OCI-LY7 (cell line): ENCODE measurements at regions of chr2 and their contacts with region 1.

Region 1: DNA sequence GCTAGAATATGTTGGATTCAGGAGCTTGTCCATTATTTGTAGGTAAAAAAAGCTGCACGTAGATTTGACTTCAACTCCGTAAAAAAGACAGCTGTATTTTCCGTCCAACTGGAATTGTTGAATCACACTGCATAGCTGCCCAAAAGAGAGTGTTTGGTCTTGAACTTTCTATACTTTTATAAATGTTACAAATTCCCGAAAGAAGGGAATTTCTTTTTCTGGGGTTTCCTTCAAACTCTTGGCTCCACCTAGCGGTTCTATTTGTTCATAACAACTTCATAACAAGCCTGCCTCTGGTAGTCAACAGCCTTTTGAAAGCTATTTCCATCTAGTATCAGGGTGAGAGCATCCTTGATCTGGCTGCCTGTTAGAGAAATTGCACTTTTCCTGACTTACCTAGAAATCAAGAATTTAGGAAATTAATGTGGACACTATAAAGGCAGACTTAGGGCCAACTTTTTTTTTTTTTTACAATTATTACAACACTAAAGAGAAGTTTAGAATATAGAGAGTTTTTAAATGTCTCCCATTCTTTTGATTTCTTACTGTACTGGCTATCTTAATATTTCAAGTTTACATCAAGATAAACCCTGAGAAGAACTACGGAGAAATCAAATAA is 48.1 kb downstream of the TMEM185B start:
- DNase-seq: peak; percentile 78
- H3K4me3 ChIP-seq: no peak overlapping the region
- H3K27ac ChIP-seq: peak overlapping the region; percentile 30
- H3K4me1 ChIP-seq: peaks cover 48% of the 10 kb centered on the region
- CTCF ChIP-seq: peak; percentile 98

Region 2: DNA sequence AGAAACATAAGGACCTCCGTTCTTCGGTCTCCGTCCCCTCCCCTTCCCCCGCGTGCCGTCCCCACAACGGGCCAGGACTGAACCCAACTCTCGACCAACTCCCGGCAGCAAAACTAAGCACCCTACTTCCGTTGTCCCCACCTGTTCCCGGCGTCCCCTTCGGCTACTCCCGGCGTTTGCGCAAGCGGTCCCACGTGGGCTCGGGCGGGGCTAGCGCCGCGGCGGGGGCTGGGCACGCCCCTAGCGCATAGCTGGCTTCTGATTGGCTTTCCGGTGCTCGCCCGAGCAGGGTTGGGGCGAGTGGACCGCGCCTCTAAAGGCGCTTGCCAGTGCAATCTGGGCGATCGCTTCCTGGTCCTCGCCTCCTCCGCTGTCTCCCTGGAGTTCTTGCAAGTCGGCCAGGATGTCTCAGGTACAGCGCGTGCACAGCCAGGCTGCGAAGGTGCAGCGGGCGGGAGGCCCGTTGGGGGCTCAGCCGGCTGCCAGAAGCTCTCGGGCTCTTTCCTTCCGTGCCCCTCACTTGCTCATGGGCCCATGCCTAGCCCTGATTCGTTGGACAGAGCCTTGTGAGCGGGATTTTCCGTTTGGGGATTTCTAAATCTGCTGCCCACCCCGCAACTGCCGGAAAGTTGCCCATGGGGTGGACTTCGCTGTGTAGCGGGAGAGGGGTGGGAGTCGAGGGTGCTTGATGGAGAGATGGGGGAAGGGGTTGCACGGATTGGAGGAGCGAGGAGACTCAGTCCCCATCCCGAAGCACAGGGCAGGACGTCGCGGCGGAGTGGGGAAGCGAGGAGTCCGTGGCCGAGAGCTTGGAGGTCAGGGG is 808.2 kb before region 1 on chr2 and contains the starts of genes C2orf76 and DBI:
- CTCF ChIA-PET with region 1: no interaction called
- POLR2A ChIA-PET with region 1: no interaction called
- intact Hi-C with region 1: loop called (anchors 5 kb)
- DNase-seq: peak; percentile 97
- H3K4me3 ChIP-seq: peak within 1 kb of the TSS; percentile 92
- H3K27ac ChIP-seq: peak within 1 kb of the TSS; percentile 77
- H3K4me1 ChIP-seq: peaks cover 39% of the 10 kb centered on the region
- CTCF ChIP-seq: no peak
- total RNA-seq, gene C2orf76: 14.2 and 15.4 TPM in 2 replicates
- total RNA-seq, gene DBI: 293 and 348 TPM in 2 replicates

Region 3: DNA sequence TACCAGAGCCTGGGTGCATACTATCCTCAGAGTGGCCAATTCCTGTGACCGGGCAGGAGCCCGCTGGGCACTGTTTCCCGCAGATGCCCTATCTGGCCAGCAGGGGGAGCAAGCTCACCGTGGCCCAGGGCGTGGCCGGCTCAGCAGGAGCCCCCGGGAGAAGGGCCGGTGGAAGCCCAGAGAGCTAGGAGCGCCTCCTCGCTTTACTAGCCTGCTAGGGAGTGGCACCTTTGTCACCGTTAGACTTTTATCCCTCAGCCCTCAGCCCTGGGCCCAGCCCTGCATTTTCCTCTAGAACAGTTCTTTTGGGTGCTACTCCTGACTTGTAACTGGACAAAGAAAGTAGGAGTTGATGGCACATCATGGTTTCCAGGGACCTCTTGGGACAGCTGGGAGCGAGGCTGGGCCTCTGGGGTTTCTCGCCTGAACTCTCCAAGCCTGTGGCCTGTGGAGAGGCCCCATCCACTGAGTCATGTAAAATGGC is 472.1 kb before region 1 on chr2:
- CTCF ChIA-PET with region 1: interaction called, 3 read pairs
- POLR2A ChIA-PET with region 1: no interaction called
- intact Hi-C with region 1: loop called (anchors 1 kb)
- DNase-seq: peak; percentile 75
- H3K4me3 ChIP-seq: no peak overlapping the region
- H3K27ac ChIP-seq: no peak overlapping the region
- H3K4me1 ChIP-seq: peaks cover 14% of the 10 kb centered on the region
- CTCF ChIP-seq: peak; percentile 97

Region 4: GRCh38 chr2:119759451-119760236 is 415.4 kb before region 1 on chr2 and contains the start of gene PTPN4:
- CTCF ChIA-PET with region 1: interaction called, 6 read pairs
- POLR2A ChIA-PET with region 1: interaction called, 23 read pairs
- intact Hi-C with region 1: loop called (anchors 1 kb)
- DNase-seq: peak; percentile 99
- H3K4me3 ChIP-seq: peak within 1 kb of the TSS; percentile 95
- H3K27ac ChIP-seq: peak within 1 kb of the TSS; percentile 84
- H3K4me1 ChIP-seq: peaks cover 19% of the 10 kb centered on the region
- CTCF ChIP-seq: no peak
- total RNA-seq, gene PTPN4: 29.8 and 50.6 TPM in 2 replicates

Region 5: GRCh38 chr2:120005834-120006521 is 169.1 kb before region 1 on chr2:
- CTCF ChIA-PET with region 1: no interaction called
- POLR2A ChIA-PET with region 1: interaction called, 10 read pairs
- intact Hi-C with region 1: no loop called
- DNase-seq: peak; percentile 65
- H3K4me3 ChIP-seq: peak overlapping the region; percentile 47
- H3K27ac ChIP-seq: peak overlapping the region; percentile 14
- H3K4me1 ChIP-seq: peaks cover 18% of the 10 kb centered on the region
- CTCF ChIP-seq: no peak

Region 6: DNA sequence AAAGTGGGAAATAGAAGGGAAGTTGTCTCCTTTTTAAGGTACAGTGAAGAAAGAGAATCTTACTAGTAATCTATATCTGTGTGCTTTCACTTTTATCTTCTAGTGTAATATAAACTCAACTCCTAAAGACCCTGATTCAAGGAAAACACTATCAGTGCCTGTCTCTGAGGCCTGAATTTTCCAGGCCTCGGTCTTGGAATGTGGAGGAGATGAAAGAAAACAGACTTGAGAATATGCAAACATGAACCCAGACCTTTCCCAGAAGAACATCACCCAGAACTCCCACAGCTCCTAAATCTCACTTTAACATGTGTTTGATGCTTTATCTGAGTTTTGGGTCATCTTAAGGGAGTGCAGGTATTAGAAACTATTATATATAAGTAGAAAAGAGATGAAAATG is 110.4 kb before region 1 on chr2:
- CTCF ChIA-PET with region 1: no interaction called
- POLR2A ChIA-PET with region 1: no interaction called
- intact Hi-C with region 1: no loop called
- DNase-seq: no peak
- H3K4me3 ChIP-seq: no peak overlapping the region
- H3K27ac ChIP-seq: no peak overlapping the region
- H3K4me1 ChIP-seq: no peaks in the 10 kb centered on the region
- CTCF ChIP-seq: no peak

Region 7: GRCh38 chr2:120109186-120110061 is 65.6 kb before region 1 on chr2:
- CTCF ChIA-PET with region 1: interaction called, 22 read pairs
- POLR2A ChIA-PET with region 1: interaction called, 16 read pairs
- intact Hi-C with region 1: loop called (anchors 1 kb)
- DNase-seq: peak; percentile 68
- H3K4me3 ChIP-seq: peak overlapping the region; percentile 17
- H3K27ac ChIP-seq: no peak overlapping the region
- H3K4me1 ChIP-seq: peaks cover 17% of the 10 kb centered on the region
- CTCF ChIP-seq: peak; percentile 86

Region 8: GRCh38 chr2:120312861-120313694 is 138.0 kb after region 1 on chr2:
- CTCF ChIA-PET with region 1: interaction called, 5 read pairs
- POLR2A ChIA-PET with region 1: interaction called, 7 read pairs
- intact Hi-C with region 1: loop called (anchors 1 kb)
- DNase-seq: peak; percentile 77
- H3K4me3 ChIP-seq: no peak overlapping the region
- H3K27ac ChIP-seq: no peak overlapping the region
- H3K4me1 ChIP-seq: peaks cover 26% of the 10 kb centered on the region
- CTCF ChIP-seq: peak; percentile 92